GM12878 (cell line): ENCODE measurements at regions of chr2 and their contacts with region 1.

Region 1: GRCh38 chr2:198657512-198658121 is 800.1 kb downstream of the SATB2 start:
- DNase-seq: no peak
- ATAC-seq: peak; percentile 64
- H3K4me3 ChIP-seq: no peak overlapping the region
- H3K27ac ChIP-seq: no peak overlapping the region
- H3K4me1 ChIP-seq: no peaks in the 10 kb centered on the region
- H3K27me3 ChIP-seq: no peaks in the 10 kb centered on the region
- CTCF ChIP-seq: peak; percentile 50 to 51 (median 50); a peak in 5 of 6 replicates
- EP300 ChIP-seq: no peak
- POLR2A ChIP-seq: no peak
- RAD21 ChIP-seq: peak; percentile 51

Region 2: GRCh38 chr2:198309673-198310280 is 347.8 kb before region 1 on chr2:
- CTCF ChIA-PET with region 1: interaction called, 9 read pairs
- POLR2A ChIA-PET with region 1: no interaction called
- RAD21 ChIA-PET with region 1: interaction called, 5 read pairs
- SMC1A ChIA-PET with region 1: interaction called, 12 read pairs
- in situ Hi-C with region 1: no loop called
- intact Hi-C with region 1: loop called (anchors 10 kb)
- DNase-seq: no peak
- ATAC-seq: peak; percentile 67
- H3K4me3 ChIP-seq: no peak overlapping the region
- H3K27ac ChIP-seq: no peak overlapping the region
- H3K4me1 ChIP-seq: no peaks in the 10 kb centered on the region
- H3K27me3 ChIP-seq: peaks cover 1 to 2% of the 10 kb centered on the region in 2 experiments; a peak in 1 of 4 replicates
- CTCF ChIP-seq: peak; percentile 69 to 83 (median 81)
- EP300 ChIP-seq: no peak
- POLR2A ChIP-seq: no peak
- RAD21 ChIP-seq: peak; percentile 79

Region 3: GRCh38 chr2:198645816-198646215 is 11.8 kb before region 1 on chr2:
- CTCF ChIA-PET with region 1: interaction called, 17 read pairs
- POLR2A ChIA-PET with region 1: no interaction called
- RAD21 ChIA-PET with region 1: interaction called, 9 read pairs
- SMC1A ChIA-PET with region 1: interaction called, 10 read pairs
- in situ Hi-C with region 1: no loop called
- intact Hi-C with region 1: no loop called
- DNase-seq: no peak
- ATAC-seq: no peak
- H3K4me3 ChIP-seq: no peak overlapping the region
- H3K27ac ChIP-seq: no peak overlapping the region
- H3K4me1 ChIP-seq: no peaks in the 10 kb centered on the region
- H3K27me3 ChIP-seq: no peaks in the 10 kb centered on the region
- CTCF ChIP-seq: no peak
- EP300 ChIP-seq: no peak
- POLR2A ChIP-seq: no peak
- RAD21 ChIP-seq: no peak

Region 4: GRCh38 chr2:198700319-198700718 is 42.7 kb after region 1 on chr2:
- CTCF ChIA-PET with region 1: interaction called, 47 read pairs
- POLR2A ChIA-PET with region 1: interaction called, 6 read pairs
- RAD21 ChIA-PET with region 1: interaction called, 51 read pairs
- SMC1A ChIA-PET with region 1: interaction called, 69 read pairs
- in situ Hi-C with region 1: no loop called
- intact Hi-C with region 1: no loop called
- DNase-seq: no peak
- ATAC-seq: peak; percentile 48
- H3K4me3 ChIP-seq: no peak overlapping the region
- H3K27ac ChIP-seq: no peak overlapping the region
- H3K4me1 ChIP-seq: no peaks in the 10 kb centered on the region
- H3K27me3 ChIP-seq: no peaks in the 10 kb centered on the region
- CTCF ChIP-seq: no peak
- EP300 ChIP-seq: 0 out of 4 replicates have a peak, but pooled peaks of 1 of the 2 experiments have one; percentile 25
- POLR2A ChIP-seq: no peak
- RAD21 ChIP-seq: no peak

Region 5: DNA sequence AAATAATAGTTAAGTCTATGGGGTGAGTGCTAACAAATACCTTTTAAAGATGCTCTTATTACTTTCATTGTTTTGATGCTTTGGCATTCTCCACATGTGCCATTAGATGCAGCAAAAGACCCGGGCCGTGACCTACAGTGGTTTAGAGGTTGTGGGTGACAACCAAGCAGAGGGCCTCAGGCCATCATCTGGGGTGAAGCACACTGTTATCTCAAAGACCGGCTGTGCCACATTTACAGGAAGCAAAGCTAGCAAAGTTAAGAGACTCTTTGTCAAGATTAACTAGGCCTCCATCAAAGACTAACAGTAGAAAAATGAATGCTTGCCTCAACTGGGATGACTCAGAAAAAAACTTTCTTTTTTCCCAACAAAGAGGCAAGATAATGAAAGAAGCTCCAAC is 104.8 kb after region 1 on chr2:
- CTCF ChIA-PET with region 1: interaction called, 11 read pairs
- POLR2A ChIA-PET with region 1: no interaction called
- RAD21 ChIA-PET with region 1: interaction called, 13 read pairs
- SMC1A ChIA-PET with region 1: interaction called, 12 read pairs
- in situ Hi-C with region 1: no loop called
- intact Hi-C with region 1: no loop called
- DNase-seq: no peak
- ATAC-seq: peak; percentile 45
- H3K4me3 ChIP-seq: no peak overlapping the region
- H3K27ac ChIP-seq: no peak overlapping the region
- H3K4me1 ChIP-seq: no peaks in the 10 kb centered on the region
- H3K27me3 ChIP-seq: no peaks in the 10 kb centered on the region
- CTCF ChIP-seq: no peak
- EP300 ChIP-seq: no peak
- POLR2A ChIP-seq: no peak
- RAD21 ChIP-seq: no peak

Region 6: DNA sequence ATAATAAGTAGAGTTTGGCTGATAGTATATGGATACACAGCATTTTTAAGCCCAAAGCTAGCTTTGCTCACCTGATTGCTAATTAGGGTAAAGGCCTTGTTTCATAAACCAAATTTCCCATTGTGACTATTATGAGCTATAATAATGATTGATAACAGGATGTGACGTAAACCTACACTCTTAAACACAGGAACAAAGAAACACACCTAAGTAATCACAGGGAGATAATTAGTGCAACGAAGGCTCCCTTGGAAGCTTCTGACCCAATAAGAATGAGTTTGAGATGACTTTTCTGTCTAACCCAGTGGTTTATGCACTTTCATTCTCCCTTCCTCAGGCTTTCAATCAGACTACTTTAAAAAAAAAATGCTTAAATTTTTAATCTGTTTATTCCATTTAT is 117.0 kb after region 1 on chr2:
- CTCF ChIA-PET with region 1: interaction called, 12 read pairs
- POLR2A ChIA-PET with region 1: no interaction called
- RAD21 ChIA-PET with region 1: interaction called, 23 read pairs
- SMC1A ChIA-PET with region 1: interaction called, 36 read pairs
- in situ Hi-C with region 1: no loop called
- intact Hi-C with region 1: no loop called
- DNase-seq: no peak
- ATAC-seq: peak; percentile 84
- H3K4me3 ChIP-seq: no peak overlapping the region
- H3K27ac ChIP-seq: no peak overlapping the region
- H3K4me1 ChIP-seq: no peaks in the 10 kb centered on the region
- H3K27me3 ChIP-seq: no peaks in the 10 kb centered on the region
- CTCF ChIP-seq: no peak
- EP300 ChIP-seq: 0 out of 4 replicates have a peak, but pooled peaks of 1 of the 2 experiments have one; percentile 45
- POLR2A ChIP-seq: no peak
- RAD21 ChIP-seq: no peak

Region 7: DNA sequence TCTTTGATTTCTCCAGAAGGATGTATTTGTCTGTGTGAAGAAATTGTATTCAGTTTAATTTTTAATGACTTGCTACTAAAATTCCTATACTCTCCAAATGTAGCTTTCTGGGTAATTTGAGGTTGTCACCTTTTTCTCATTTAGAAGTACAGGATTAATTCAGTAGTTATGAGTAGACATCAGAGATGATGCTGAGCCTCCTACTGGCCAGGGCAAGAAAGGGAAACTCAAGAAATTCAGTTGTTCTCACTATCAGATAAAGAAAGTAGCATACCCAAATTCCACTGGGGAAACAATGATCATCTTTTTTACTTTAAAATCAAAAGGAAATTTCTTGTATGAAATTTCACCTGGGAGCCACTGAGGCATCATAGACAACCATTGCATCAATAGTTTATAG is 600.7 kb after region 1 on chr2:
- CTCF ChIA-PET with region 1: interaction called, 19 read pairs
- POLR2A ChIA-PET with region 1: no interaction called
- RAD21 ChIA-PET with region 1: interaction called, 6 read pairs
- SMC1A ChIA-PET with region 1: interaction called, 9 read pairs
- in situ Hi-C with region 1: no loop called
- intact Hi-C with region 1: no loop called
- DNase-seq: no peak
- ATAC-seq: peak; percentile 61
- H3K4me3 ChIP-seq: no peak overlapping the region
- H3K27ac ChIP-seq: no peak overlapping the region
- H3K4me1 ChIP-seq: no peaks in the 10 kb centered on the region
- H3K27me3 ChIP-seq: no peaks in the 10 kb centered on the region
- CTCF ChIP-seq: peak; percentile 28 to 40 (median 30); a peak in 4 of 6 replicates
- EP300 ChIP-seq: no peak
- POLR2A ChIP-seq: no peak
- RAD21 ChIP-seq: peak; percentile 40; the same call in 1 of the 2 replicates

Region 8: DNA sequence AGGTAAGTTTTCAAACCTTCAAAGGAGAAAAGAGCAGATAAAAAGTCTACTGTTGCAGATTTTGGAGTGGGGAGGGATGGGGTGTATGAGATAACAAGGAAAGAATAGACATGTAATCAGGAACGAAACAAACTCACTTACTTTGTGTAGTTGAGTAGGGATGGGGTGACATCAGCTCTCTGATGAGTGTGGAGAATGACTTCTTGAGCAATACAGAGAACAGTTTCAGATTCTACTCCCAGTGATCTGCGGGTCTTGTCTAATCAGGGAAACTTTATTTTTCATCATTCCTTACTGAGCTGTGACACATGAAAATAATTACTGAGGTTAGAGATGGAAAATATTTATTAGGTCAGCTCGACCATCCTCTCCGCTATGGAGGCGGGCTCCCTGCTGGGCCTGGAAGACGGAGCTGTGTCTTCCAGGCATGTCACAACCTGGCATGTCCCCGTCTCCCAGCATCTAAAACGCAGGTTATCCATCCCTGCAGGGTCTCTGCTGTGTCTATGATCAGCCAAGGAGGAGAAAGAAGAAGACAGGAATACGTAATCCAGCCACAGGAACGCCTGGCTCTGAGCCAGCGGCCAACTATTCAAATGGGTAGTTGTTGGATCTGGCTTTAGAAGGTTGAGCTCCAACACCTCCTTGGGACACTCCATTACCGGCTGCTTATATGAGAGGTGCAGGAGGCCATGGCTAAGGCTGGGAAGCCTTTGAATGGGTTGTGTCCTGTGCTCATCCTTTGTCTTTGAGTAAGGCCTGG is 899.1 kb after region 1 on chr2:
- CTCF ChIA-PET with region 1: no interaction called
- POLR2A ChIA-PET with region 1: no interaction called
- RAD21 ChIA-PET with region 1: no interaction called
- SMC1A ChIA-PET with region 1: no interaction called
- in situ Hi-C with region 1: no loop called
- intact Hi-C with region 1: no loop called
- DNase-seq: no peak
- ATAC-seq: no peak
- H3K4me3 ChIP-seq: no peak overlapping the region
- H3K27ac ChIP-seq: no peak overlapping the region
- H3K4me1 ChIP-seq: no peaks in the 10 kb centered on the region
- H3K27me3 ChIP-seq: no peaks in the 10 kb centered on the region; a peak in 1 of 4 replicates
- CTCF ChIP-seq: no peak
- EP300 ChIP-seq: no peak
- POLR2A ChIP-seq: no peak
- RAD21 ChIP-seq: no peak